Psoas muscle (tissue), 8 donors: ENCODE measurements at regions of chr5 and their contacts with region 1.

Region 1: DNA sequence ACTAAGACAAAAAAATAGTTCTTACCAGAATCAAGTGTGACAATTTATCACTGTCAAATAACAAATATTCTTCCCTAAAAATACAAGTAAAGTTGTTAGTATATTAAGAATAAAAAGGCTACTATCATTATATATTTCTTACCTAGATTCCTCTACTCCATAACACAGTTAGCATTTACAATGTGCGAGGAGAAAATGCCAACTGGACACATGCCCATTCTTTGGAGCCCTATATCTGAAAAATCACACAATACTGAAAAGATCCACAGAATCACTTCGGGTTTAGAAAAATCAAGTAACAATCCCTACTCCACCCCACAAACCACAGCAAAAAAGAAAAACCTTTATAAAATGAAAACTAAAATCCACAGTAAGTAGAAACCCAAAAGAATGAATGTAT is 70.9 kb downstream of the PKD2L2 start:
- DNase-seq: no peak
- ATAC-seq: no peak
- H3K4me3 ChIP-seq: no peak overlapping the region
- H3K27ac ChIP-seq: no peak overlapping the region
- H3K4me1 ChIP-seq: peaks cover 11% of the 10 kb centered on the region
- H3K27me3 ChIP-seq: no peaks in the 10 kb centered on the region
- CTCF ChIP-seq: no peak

Region 2: DNA sequence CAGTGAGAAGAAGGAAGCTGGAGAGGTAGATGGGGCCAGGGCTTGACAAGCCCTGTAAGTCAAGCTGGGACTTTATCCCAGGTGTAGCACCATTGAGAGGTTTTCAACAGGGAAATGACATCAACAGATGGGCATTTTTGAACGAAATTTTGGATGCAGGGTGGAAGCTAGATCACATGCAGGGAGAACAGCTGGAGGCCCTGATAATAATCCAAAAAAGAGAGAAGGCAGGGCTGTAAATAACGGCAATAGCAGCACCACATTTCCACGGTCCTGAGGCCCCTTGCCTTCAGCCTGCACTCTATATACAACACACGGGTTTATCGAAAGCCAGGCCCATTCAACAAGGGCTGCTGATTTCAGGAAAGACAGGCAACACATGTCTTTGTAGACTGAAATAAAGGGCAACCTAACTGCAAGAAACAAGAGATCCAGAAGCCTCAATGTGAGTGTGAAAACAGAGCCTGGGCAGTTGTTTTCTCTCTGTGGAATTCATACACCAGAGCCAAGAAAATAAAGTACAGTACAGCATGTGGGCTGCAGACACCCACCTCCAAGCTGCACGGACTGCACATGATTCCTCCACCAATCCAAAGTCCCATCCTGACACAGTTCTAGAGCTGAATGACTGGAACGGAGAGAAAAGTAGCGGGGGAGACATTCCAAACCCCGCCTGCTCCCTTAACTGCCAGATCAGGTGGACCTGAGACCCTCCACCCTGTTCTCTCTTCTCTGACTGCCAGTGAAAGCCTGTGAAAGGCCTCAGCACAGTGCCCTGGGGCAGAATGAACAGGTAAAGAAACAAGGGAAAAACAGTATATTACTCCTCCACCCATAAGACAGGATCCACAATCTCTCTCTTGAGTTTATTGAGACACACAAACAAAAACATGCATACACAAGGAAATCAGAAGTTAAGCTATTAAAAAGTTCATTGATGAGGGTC is 260.5 kb before region 1 on chr5:
- intact Hi-C with region 1: no loop called
- DNase-seq: no peak
- ATAC-seq: no peak
- H3K4me3 ChIP-seq: no peak overlapping the region
- H3K27ac ChIP-seq: no peak overlapping the region
- H3K4me1 ChIP-seq: peaks cover 11% of the 10 kb centered on the region
- H3K27me3 ChIP-seq: no peaks in the 10 kb centered on the region
- CTCF ChIP-seq: no peak

Region 3: GRCh38 chr5:137847687-137848086 is 112.5 kb before region 1 on chr5:
- intact Hi-C with region 1: no loop called
- DNase-seq: peak in 1 of 2 donors; percentile 17
- ATAC-seq: peak; percentile 86 to 92 (median 90)
- H3K4me3 ChIP-seq: peak overlapping the region; percentile 57
- H3K27ac ChIP-seq: peak overlapping the region; percentile 94
- H3K4me1 ChIP-seq: peaks cover 31% of the 10 kb centered on the region
- H3K27me3 ChIP-seq: no peaks in the 10 kb centered on the region
- CTCF ChIP-seq: no peak

Region 4: GRCh38 chr5:137997726-137998213 is 37.6 kb after region 1 on chr5:
- intact Hi-C with region 1: loop called in 1 of 2 experiments (anchors 5 kb)
- DNase-seq: no peak
- ATAC-seq: no peak
- H3K4me3 ChIP-seq: no peak overlapping the region
- H3K27ac ChIP-seq: no peak overlapping the region
- H3K4me1 ChIP-seq: peaks cover 43% of the 10 kb centered on the region
- H3K27me3 ChIP-seq: no peaks in the 10 kb centered on the region
- CTCF ChIP-seq: no peak

Region 5: DNA sequence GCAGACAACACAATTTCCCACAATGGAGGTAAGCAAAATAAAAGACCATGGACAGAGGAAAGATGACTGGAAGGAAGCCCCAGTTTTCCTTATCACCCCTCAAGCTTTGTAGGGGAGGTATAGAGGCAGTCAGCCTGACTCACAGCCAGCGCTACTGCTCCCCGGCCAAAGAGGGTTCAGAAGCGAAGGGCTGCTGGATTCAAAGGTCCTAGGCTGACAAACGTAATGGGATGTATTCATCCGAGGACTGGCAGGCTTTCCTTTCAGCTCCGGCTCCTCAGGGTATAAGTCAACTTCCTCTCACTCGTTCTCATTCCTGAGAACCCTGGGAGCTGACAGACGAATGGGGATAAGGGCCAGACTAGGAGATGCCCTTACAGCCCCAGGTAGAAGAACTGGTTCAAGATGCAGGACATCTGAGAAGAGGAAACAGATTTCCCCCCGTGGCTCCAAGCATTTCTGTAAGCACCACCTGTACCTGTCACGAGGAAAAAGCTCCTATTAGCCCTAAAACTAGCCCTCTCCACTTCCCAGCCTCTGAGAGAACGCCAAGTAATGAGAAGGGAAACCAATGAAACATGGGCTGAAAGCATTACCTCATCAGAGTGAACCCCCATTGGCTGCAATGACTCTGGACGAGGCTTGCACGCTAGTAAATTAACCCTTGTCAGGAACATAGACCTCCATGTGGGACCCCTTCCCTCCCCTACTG is 94.9 kb after region 1 on chr5:
- intact Hi-C with region 1: no loop called
- DNase-seq: no peak
- ATAC-seq: no peak
- H3K4me3 ChIP-seq: no peak overlapping the region
- H3K27ac ChIP-seq: no peak overlapping the region
- H3K4me1 ChIP-seq: no peaks in the 10 kb centered on the region
- H3K27me3 ChIP-seq: no peaks in the 10 kb centered on the region
- CTCF ChIP-seq: no peak

Region 6: DNA sequence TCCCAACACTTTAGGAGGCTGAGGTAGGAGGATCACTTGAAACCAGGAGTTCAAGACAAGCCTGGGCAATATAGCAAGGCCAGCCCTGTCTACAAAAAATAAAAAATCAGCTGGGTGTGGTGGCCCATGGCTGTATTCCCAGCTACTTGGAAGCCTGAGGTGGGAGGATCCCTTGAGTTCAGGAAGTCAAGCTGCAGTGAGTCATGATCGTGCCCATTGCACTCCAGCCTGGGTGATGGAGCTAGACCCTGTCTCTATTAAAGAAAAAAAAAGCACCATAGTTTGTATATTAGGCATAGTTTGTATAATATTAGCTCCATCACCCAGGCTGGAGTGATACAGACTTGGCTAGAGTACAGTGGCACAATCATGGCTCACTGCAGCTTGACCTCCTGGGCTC is 188.7 kb after region 1 on chr5:
- intact Hi-C with region 1: no loop called
- DNase-seq: peak in 1 of 2 donors; percentile 19
- ATAC-seq: peak in 1 of 4 donors; percentile 37
- H3K4me3 ChIP-seq: no peak overlapping the region
- H3K27ac ChIP-seq: no peak overlapping the region
- H3K4me1 ChIP-seq: no peaks in the 10 kb centered on the region
- H3K27me3 ChIP-seq: no peaks in the 10 kb centered on the region
- CTCF ChIP-seq: no peak